ENCODE measurements at regions of chr11 and their contacts with region 1.

Region 1: DNA sequence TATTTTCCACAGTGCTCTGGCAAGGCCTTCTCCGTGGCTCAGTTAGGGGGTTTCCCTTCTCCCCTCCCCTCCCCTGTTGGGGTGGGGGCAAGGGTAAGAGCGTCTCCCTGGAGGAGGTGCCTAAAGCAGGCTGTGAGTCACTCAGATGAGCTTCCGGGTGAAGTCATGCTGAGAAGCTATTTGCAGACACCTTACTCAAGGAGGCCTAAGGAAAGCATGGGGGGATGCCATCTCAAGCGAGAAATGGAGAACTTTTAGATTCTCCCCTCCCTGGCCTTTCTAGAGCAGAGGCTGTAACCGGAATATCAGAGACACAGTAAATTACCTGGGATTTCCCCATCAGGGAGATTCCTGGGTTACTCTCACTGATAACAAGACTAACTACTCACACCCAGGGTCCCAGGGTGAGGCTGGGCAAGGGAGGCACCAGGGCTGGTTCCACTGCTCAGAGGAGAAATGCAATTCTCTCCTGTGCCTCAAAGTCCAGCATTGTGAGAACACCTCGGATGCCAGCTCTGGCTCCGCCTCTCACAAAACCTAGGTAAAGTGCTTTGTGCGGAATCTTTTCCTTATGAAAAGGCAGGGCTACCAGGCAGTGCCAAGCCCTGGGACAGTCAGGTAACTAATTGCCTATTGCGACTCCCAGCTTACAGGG is 123.6 kb downstream of the ABTB2 start:
- DNase-seq: peak; percentile 88
- ATAC-seq: peak; percentile 86
- H3K4me3 ChIP-seq: peak overlapping the region; percentile 29; the same call in 1 of the 2 replicates
- H3K27ac ChIP-seq: peak overlapping the region; percentile 54
- H3K4me1 ChIP-seq: peaks cover 48% of the 10 kb centered on the region
- H3K27me3 ChIP-seq: no peaks in the 10 kb centered on the region
- CTCF ChIP-seq: no peak
- EP300 ChIP-seq: peak; percentile 39 to 59; a peak in 2 of 4 replicates
- POLR2A ChIP-seq: no peak
- RAD21 ChIP-seq: no peak; the same call in 1 of the 2 replicates

Region 2: DNA sequence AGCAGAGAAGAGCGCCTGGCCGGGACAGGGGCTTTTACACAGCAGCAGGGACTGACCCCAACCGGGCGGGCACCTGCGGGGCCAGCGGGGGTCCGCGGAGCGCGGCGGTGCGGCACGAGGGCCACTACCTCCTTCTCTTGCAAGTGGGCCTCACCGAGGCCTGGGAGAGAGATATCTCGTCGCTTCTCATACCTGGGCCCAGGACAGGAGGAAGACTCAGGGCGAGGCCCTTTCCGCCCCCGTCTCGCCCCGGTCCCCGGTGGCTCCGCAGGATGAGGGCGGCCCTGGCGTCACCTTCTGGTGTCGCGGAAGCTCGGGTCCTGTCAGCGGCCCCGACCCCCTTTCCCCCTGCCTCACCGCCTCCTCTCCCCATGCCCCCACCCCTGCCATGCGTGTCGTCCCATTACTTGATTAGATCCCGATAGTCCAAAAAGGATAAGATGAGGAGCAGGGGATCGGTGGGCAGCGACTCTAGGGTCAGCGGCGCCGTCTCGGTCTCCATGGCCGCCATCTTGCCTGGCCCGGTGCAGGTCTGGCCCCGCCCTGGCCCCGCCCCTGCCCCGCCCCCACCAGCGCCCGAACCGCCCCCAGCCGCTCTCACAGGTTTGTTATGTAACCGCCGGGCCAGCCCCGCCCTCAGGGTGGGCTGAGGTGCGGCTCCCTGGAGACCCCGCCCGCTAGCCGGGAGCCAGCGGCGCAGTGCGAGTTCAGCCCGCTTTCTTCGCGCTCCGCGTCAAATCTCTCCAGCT is 460.1 kb before region 1 on chr11 and contains the start of gene FBXO3:
- CTCF ChIA-PET with region 1: no interaction called
- POLR2A ChIA-PET with region 1: no interaction called
- RAD21 ChIA-PET with region 1: no interaction called
- SMC1A ChIA-PET with region 1: no interaction called
- in situ Hi-C with region 1: no loop called
- intact Hi-C with region 1: loop called (anchors 10 kb)
- DNase-seq: no peak
- ATAC-seq: peak; percentile 88
- H3K4me3 ChIP-seq: peak within 1 kb of the TSS; percentile 96
- H3K27ac ChIP-seq: peak within 1 kb of the TSS; percentile 26; the same call in 1 of the 2 replicates
- H3K4me1 ChIP-seq: peaks cover 21% of the 10 kb centered on the region
- H3K27me3 ChIP-seq: no peaks in the 10 kb centered on the region
- CTCF ChIP-seq: no peak
- EP300 ChIP-seq: no peak
- POLR2A ChIP-seq: peak; percentile 85
- RAD21 ChIP-seq: no peak
- polyA plus RNA-seq, gene FBXO3: 12.4 to 27.1 TPM

Region 3: DNA sequence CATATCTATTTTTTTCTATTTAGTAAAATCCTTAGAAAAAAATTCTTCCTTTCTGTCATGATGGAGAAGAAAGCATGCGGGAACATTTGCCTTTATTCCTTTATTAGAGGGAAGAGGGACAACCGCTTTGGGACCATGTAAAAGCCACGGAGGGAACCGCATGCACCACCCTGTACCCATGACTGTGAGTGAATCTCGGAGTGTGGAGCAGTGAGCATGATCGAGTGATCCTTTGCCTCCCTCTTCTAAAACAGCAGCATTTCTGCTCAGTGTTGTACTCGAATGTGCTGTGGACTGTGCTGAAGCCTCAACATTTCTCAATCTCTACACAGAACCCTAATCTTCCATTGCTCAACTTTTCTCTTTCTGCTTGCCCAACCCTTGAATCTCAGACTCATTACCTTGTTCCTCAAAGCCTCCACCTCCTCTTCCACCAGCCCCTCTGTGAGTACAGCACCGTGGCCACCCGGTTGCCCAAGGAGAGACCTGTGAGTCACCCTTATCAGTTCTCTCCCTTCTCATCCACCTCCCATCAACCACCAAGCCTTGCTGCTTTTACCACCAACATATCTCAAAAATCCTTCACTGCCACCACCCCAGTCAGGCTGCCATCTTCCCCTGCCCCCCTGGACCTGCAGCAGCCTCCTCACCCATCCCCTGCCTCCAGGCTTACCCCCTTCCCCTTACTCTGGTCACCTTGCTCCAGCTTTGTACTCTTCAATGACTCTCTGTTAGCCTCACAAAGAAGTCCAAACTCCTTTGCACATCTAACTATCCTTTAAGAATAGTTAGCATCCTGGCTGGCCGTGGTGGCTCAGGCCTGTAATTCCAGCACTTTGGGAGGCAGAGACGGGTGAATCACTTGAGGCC is 25.7 kb before region 1 on chr11:
- CTCF ChIA-PET with region 1: no interaction called
- POLR2A ChIA-PET with region 1: interaction called, 6 read pairs
- RAD21 ChIA-PET with region 1: interaction called, 6 read pairs
- SMC1A ChIA-PET with region 1: interaction called, 11 read pairs
- in situ Hi-C with region 1: no loop called
- intact Hi-C with region 1: no loop called
- DNase-seq: no peak
- ATAC-seq: 0 out of 3 replicates have a peak, but pooled peaks have one; percentile 23
- H3K4me3 ChIP-seq: no peak overlapping the region
- H3K27ac ChIP-seq: no peak overlapping the region
- H3K4me1 ChIP-seq: peaks cover 7% of the 10 kb centered on the region
- H3K27me3 ChIP-seq: no peaks in the 10 kb centered on the region
- CTCF ChIP-seq: no peak
- EP300 ChIP-seq: no peak
- POLR2A ChIP-seq: no peak
- RAD21 ChIP-seq: no peak

Region 4: DNA sequence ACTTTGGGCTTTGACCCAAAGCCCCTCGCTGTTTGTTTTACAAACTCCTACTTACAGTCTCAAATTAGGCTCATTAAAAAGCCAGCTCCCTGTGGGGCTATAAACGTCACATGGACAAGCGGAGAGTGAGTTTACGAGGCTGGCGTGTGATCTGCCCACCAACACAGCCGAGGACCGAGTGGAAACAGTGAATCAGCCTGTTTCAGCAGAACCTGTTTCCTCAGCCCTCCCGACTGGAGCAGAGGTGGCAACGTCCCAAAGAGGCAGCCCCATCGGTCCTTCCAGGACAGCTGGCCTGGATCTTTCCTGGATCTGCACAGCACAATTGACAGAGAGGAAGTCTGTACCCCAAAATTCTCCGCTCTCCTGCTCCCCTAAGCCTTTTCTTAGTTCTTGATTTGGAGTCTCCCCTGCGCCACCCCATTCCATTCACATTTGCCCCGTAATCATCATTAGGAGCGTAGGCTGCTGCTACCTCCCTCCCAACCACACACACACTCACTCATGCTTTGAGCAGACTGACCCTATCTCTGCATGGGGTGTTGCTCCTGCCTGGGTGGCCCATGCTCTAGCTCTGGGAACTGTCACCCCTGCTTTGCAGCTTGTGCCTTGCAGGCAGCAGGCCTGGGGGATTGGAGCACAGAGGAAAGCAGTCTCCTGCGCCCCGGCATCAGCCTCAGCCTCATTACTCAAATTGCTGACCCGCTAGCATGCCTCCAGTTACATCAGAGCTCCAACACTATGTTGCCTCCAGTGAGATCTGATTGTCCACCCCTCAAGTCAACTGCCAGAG is 11.0 kb before region 1 on chr11:
- CTCF ChIA-PET with region 1: no interaction called
- POLR2A ChIA-PET with region 1: interaction called, 3 read pairs
- RAD21 ChIA-PET with region 1: interaction called, 5 read pairs
- SMC1A ChIA-PET with region 1: interaction called, 10 read pairs
- in situ Hi-C with region 1: no loop called
- intact Hi-C with region 1: no loop called
- DNase-seq: no peak
- ATAC-seq: no peak
- H3K4me3 ChIP-seq: no peak overlapping the region
- H3K27ac ChIP-seq: no peak overlapping the region
- H3K4me1 ChIP-seq: no peaks in the 10 kb centered on the region
- H3K27me3 ChIP-seq: no peaks in the 10 kb centered on the region; a peak in 1 of 4 replicates
- CTCF ChIP-seq: no peak
- EP300 ChIP-seq: no peak
- POLR2A ChIP-seq: no peak
- RAD21 ChIP-seq: no peak

Region 5: DNA sequence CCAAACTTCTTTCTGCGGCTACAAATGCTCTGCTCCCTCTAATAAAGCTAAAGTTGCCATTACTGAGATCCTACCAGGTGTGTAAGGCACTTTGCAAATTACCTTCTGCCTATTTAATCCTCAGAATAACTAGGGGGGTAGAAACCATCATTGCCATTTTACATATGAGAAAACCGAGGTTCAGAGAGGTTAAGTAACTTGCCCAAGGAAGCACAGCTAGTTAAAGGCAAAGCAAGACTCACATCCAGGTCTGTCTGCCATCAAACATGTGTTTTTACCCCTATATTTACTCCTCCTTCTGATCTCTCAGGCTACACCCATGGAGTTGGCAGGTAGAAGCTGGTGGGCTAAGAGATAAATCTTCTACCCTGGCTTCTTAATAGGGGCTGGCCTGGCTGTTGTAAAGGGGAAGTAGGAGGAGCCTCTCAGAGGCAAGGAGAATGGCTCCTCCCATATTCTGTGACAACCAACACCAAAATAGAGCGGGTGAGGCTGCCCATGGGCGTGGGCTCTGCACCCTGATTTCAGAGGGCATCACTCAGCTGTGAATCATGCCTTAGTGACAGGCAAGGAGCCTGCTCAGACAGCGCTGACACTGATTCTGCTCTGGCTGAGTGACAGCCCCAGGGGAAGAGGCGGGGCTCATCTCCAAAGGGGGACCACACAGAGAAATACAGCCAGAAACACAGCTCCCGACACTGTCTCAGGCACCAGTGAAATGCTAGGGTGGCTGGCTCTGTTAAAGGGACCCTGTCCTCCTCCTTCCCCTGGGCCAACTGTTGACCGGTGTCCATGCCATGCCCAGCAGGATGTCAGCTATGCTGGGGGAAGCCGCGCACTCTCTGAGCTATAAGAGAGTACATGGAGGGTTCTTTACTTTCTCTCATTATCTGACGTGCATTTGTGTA is 16.8 kb after region 1 on chr11:
- CTCF ChIA-PET with region 1: interaction called, 12 read pairs
- POLR2A ChIA-PET with region 1: interaction called, 10 read pairs
- RAD21 ChIA-PET with region 1: interaction called, 28 read pairs
- SMC1A ChIA-PET with region 1: interaction called, 138 read pairs
- in situ Hi-C with region 1: no loop called
- intact Hi-C with region 1: no loop called
- DNase-seq: no peak
- ATAC-seq: peak; percentile 86
- H3K4me3 ChIP-seq: no peak overlapping the region
- H3K27ac ChIP-seq: no peak overlapping the region
- H3K4me1 ChIP-seq: peaks cover 16% of the 10 kb centered on the region
- H3K27me3 ChIP-seq: no peaks in the 10 kb centered on the region
- CTCF ChIP-seq: no peak
- EP300 ChIP-seq: no peak
- POLR2A ChIP-seq: no peak
- RAD21 ChIP-seq: no peak

Measured in GM12878 (cell line).